B cell (primary cell): ENCODE measurements at regions of chr11 and their contacts with region 1.

Region 1: GRCh38 chr11:67439321-67439883 is 1.9 kb upstream of the PTPRCAP start:
- DNase-seq: peak; percentile 50
- ATAC-seq: no peak
- H3K4me3 ChIP-seq: peak overlapping the region in 2 of 5 experiments; percentile 92 to 96
- H3K4me3 Mint-ChIP-seq: peak overlapping the region; percentile 88
- H3K27ac ChIP-seq: peak overlapping the region; percentile 22 to 88
- H3K27ac Mint-ChIP-seq: peak overlapping the region; percentile 92
- H3K4me1 ChIP-seq: peaks cover 68 to 85% of the 10 kb centered on the region in 2 donors
- H3K4me1 Mint-ChIP-seq: peaks cover 82% of the 10 kb centered on the region
- H3K27me3 ChIP-seq: no peaks in the 10 kb centered on the region
- H3K27me3 Mint-ChIP-seq: no peaks in the 10 kb centered on the region
- CTCF ChIP-seq: no peak

Region 2: GRCh38 chr11:67373925-67374618 is 65.3 kb before region 1 on chr11:
- CTCF ChIA-PET with region 1: interaction called, 3 read pairs
- POLR2A ChIA-PET with region 1: interaction called, 13 read pairs
- intact Hi-C with region 1: no loop called
- DNase-seq: peak; percentile 77
- ATAC-seq: peak; percentile 35
- H3K4me3 ChIP-seq: peak overlapping the region in 4 of 5 experiments; percentile 48 to 95 (median 76)
- H3K4me3 Mint-ChIP-seq: peak overlapping the region; percentile 94
- H3K27ac ChIP-seq: peak overlapping the region; percentile 41 to 89
- H3K27ac Mint-ChIP-seq: peak overlapping the region; percentile 92
- H3K4me1 ChIP-seq: peaks cover 40 to 47% of the 10 kb centered on the region in 2 donors
- H3K4me1 Mint-ChIP-seq: peaks cover 50% of the 10 kb centered on the region
- H3K27me3 ChIP-seq: no peaks in the 10 kb centered on the region
- H3K27me3 Mint-ChIP-seq: no peaks in the 10 kb centered on the region
- CTCF ChIP-seq: peak; percentile 66

Region 3: GRCh38 chr11:67409261-67409666 is 30.1 kb before region 1 on chr11:
- CTCF ChIA-PET with region 1: interaction called, 63 read pairs
- POLR2A ChIA-PET with region 1: interaction called, 195 read pairs
- intact Hi-C with region 1: no loop called
- DNase-seq: peak; percentile 82
- ATAC-seq: peak; percentile 55
- H3K4me3 ChIP-seq: peak overlapping the region in 4 of 5 experiments; percentile 40 to 80 (median 56)
- H3K4me3 Mint-ChIP-seq: peak overlapping the region; percentile 91
- H3K27ac ChIP-seq: peak overlapping the region; percentile 83 to 88
- H3K27ac Mint-ChIP-seq: peak overlapping the region; percentile 100
- H3K4me1 ChIP-seq: peaks cover 92 to 99% of the 10 kb centered on the region in 2 donors
- H3K4me1 Mint-ChIP-seq: peaks cover 91% of the 10 kb centered on the region
- H3K27me3 ChIP-seq: no peaks in the 10 kb centered on the region
- H3K27me3 Mint-ChIP-seq: no peaks in the 10 kb centered on the region
- CTCF ChIP-seq: no peak

Region 4: GRCh38 chr11:67428052-67428914 is 11.1 kb before region 1 on chr11 and contains the start of gene RPS6KB2:
- CTCF ChIA-PET with region 1: interaction called, 10 read pairs
- POLR2A ChIA-PET with region 1: interaction called, 33 read pairs
- intact Hi-C with region 1: loop called (anchors 1 kb)
- DNase-seq: peak; percentile 98
- ATAC-seq: peak; percentile 86
- H3K4me3 ChIP-seq: peak within 1 kb of the TSS; percentile 82 to 95 (median 91)
- H3K4me3 Mint-ChIP-seq: peak within 1 kb of the TSS; percentile 99
- H3K27ac ChIP-seq: peak within 1 kb of the TSS; percentile 70 to 92
- H3K27ac Mint-ChIP-seq: peak within 1 kb of the TSS; percentile 96
- H3K4me1 ChIP-seq: peaks cover 13 to 46% of the 10 kb centered on the region in 2 donors
- H3K4me1 Mint-ChIP-seq: peaks cover 41% of the 10 kb centered on the region
- H3K27me3 ChIP-seq: no peaks in the 10 kb centered on the region
- H3K27me3 Mint-ChIP-seq: no peaks in the 10 kb centered on the region
- CTCF ChIP-seq: no peak
- total RNA-seq, gene RPS6KB2: 81.8 and 82.0 TPM in 2 replicates

Region 5: DNA sequence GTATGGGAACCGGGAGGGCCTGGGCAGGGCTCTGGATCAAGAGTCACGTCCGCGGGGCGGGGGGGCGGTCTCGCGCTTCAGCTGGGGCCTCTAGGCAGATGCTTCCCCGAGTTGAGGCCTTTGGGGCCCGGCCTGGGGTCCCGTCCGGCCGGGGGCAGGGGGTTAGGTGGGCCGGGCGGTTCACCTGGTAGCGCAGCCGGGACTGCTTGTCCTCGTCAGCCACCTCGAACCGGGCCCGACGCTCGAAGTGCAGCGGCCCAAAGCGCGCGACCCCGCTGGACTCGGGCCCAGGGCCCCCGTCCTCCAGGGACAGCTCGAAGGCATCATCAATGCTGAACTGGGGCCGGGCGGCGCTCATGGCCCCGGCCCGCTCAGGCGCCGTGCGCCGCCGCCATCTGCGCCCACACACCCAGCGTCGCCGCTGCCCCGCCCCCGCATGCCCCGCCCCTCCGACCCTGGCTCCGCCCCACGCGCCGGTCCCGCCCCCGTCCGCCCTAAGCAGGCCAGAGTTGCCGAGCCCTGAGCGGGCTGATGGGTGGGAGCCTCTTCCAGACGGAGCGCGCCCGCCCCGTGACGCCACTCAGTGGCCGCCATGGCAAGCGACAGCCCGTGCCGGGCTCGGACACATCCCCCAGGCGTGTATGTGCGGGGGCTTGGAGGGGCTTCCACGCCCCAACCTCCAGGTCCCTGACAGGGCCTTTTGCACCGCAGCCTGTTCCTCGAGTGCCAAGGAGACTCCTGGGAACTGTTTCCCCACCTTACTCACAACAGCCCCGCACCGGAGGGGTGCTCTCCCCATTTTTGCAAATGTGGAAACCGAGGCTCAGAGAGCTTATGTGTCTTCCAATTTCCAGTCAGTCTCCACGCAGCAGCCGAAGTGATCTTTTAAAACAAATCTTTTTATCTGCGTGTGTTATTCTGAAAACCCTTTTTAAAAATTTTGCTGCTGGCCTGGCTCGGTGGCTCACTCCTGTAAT is 29.7 kb after region 1 on chr11 and contains the start of gene TMEM134:
- CTCF ChIA-PET with region 1: interaction called, 30 read pairs
- POLR2A ChIA-PET with region 1: interaction called, 215 read pairs
- intact Hi-C with region 1: loop called (anchors 1 kb)
- DNase-seq: peak; percentile 92
- ATAC-seq: peak; percentile 75
- H3K4me3 ChIP-seq: peak within 1 kb of the TSS; percentile 61 to 96 (median 91)
- H3K4me3 Mint-ChIP-seq: peak within 1 kb of the TSS; percentile 95
- H3K27ac ChIP-seq: peak within 1 kb of the TSS; percentile 78 to 87
- H3K27ac Mint-ChIP-seq: peak within 1 kb of the TSS; percentile 95
- H3K4me1 ChIP-seq: peaks cover 31 to 55% of the 10 kb centered on the region in 2 donors
- H3K4me1 Mint-ChIP-seq: peaks cover 49% of the 10 kb centered on the region
- H3K27me3 ChIP-seq: no peaks in the 10 kb centered on the region
- H3K27me3 Mint-ChIP-seq: no peaks in the 10 kb centered on the region
- CTCF ChIP-seq: peak; percentile 63
- total RNA-seq, gene TMEM134: 154 and 167 TPM in 2 replicates

Region 6: DNA sequence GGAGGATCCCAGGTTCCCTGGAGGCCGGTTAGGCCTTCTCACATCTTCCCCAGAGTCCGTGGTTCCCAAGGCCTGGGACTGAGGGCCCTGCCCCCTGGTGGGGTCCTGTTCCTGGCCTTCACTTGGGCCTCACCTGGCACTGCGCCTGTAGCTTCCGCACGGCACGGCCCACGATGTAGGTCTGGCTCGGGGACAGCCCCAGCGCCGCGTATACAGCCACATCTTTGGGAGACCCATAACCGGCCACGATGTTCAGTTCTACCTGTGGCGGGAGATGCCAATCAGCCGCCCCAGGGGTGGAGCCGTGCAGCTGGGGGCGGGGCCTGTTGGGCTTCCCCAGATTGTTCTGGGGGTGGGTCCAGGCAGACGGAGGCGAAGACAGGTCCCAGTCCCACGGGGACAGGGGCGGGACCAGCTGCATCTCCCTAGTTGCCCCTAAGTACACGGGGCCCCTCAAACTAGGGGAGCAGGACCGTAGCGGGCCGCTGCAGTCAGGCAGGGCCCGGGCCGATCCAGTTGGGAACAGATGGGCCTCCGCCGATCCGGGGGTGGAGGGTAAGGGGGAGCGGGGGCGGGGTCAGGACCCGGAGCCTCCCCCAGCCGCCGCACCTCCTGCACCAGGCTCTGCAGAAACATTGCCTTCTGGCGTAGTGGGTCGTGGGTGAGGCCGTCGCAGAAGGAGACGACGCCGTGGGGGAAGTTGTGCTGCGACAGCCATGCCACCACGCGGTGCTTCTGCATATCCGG is 53.6 kb after region 1 on chr11:
- CTCF ChIA-PET with region 1: no interaction called
- POLR2A ChIA-PET with region 1: no interaction called
- intact Hi-C with region 1: no loop called
- DNase-seq: no peak
- ATAC-seq: no peak
- H3K4me3 ChIP-seq: no peak overlapping the region
- H3K4me3 Mint-ChIP-seq: no peak overlapping the region
- H3K27ac ChIP-seq: no peak overlapping the region
- H3K27ac Mint-ChIP-seq: no peak overlapping the region
- H3K4me1 ChIP-seq: peaks cover 0 to 3% of the 10 kb centered on the region in 2 donors
- H3K4me1 Mint-ChIP-seq: peaks cover 4% of the 10 kb centered on the region
- H3K27me3 ChIP-seq: no peaks in the 10 kb centered on the region
- H3K27me3 Mint-ChIP-seq: no peaks in the 10 kb centered on the region
- CTCF ChIP-seq: no peak

Region 7: GRCh38 chr11:67507864-67508485 is 68.6 kb after region 1 on chr11 and contains the start of gene CDK2AP2:
- CTCF ChIA-PET with region 1: interaction called, 4 read pairs
- POLR2A ChIA-PET with region 1: interaction called, 13 read pairs
- intact Hi-C with region 1: loop called (anchors 1 kb)
- DNase-seq: peak; percentile 100
- ATAC-seq: peak; percentile 74
- H3K4me3 ChIP-seq: peak within 1 kb of the TSS; percentile 57 to 88 (median 79)
- H3K4me3 Mint-ChIP-seq: peak within 1 kb of the TSS; percentile 92
- H3K27ac ChIP-seq: peak within 1 kb of the TSS; percentile 84 to 98
- H3K27ac Mint-ChIP-seq: peak within 1 kb of the TSS; percentile 95
- H3K4me1 ChIP-seq: peaks cover 39 to 46% of the 10 kb centered on the region in 2 donors
- H3K4me1 Mint-ChIP-seq: peaks cover 42% of the 10 kb centered on the region
- H3K27me3 ChIP-seq: peaks cover 0 to 16% (median 4%) of the 10 kb centered on the region in 4 experiments
- H3K27me3 Mint-ChIP-seq: peaks cover 8% of the 10 kb centered on the region
- CTCF ChIP-seq: no peak
- total RNA-seq, gene CDK2AP2: 50.3 and 62.7 TPM in 2 replicates

Region 8: GRCh38 chr11:67583247-67584204 is 144.1 kb after region 1 on chr11 and contains the start of gene GSTP1:
- CTCF ChIA-PET with region 1: no interaction called
- POLR2A ChIA-PET with region 1: interaction called, 10 read pairs
- intact Hi-C with region 1: no loop called
- DNase-seq: peak; percentile 86
- ATAC-seq: peak; percentile 71
- H3K4me3 ChIP-seq: peak within 1 kb of the TSS; percentile 34 to 69 (median 58)
- H3K4me3 Mint-ChIP-seq: peak within 1 kb of the TSS; percentile 93
- H3K27ac ChIP-seq: peak within 1 kb of the TSS; percentile 51 to 91
- H3K27ac Mint-ChIP-seq: peak within 1 kb of the TSS; percentile 100
- H3K4me1 ChIP-seq: peaks cover 67 to 73% of the 10 kb centered on the region in 2 donors
- H3K4me1 Mint-ChIP-seq: peaks cover 68% of the 10 kb centered on the region
- H3K27me3 ChIP-seq: peaks cover 0 to 4% (median 2%) of the 10 kb centered on the region in 4 experiments
- H3K27me3 Mint-ChIP-seq: peaks cover 5% of the 10 kb centered on the region
- CTCF ChIP-seq: peak; percentile 71
- total RNA-seq, gene GSTP1: 296 and 313 TPM in 2 replicates